Prostate gland (tissue), 2 donors: ENCODE measurements at regions of chr6 and their contacts with region 1.

Region 1: GRCh38 chr6:41936073-41936837 is 5.4 kb downstream of the CCND3 start:
- DNase-seq: peak; percentile 77
- H3K4me3 ChIP-seq: no peak overlapping the region
- H3K27ac ChIP-seq: no peak overlapping the region
- H3K4me1 ChIP-seq: peaks cover 8% of the 10 kb centered on the region
- H3K27me3 ChIP-seq: no peaks in the 10 kb centered on the region
- CTCF ChIP-seq: peak; percentile 59 to 79 (median 70)
- POLR2A ChIP-seq: no peak

Region 2: DNA sequence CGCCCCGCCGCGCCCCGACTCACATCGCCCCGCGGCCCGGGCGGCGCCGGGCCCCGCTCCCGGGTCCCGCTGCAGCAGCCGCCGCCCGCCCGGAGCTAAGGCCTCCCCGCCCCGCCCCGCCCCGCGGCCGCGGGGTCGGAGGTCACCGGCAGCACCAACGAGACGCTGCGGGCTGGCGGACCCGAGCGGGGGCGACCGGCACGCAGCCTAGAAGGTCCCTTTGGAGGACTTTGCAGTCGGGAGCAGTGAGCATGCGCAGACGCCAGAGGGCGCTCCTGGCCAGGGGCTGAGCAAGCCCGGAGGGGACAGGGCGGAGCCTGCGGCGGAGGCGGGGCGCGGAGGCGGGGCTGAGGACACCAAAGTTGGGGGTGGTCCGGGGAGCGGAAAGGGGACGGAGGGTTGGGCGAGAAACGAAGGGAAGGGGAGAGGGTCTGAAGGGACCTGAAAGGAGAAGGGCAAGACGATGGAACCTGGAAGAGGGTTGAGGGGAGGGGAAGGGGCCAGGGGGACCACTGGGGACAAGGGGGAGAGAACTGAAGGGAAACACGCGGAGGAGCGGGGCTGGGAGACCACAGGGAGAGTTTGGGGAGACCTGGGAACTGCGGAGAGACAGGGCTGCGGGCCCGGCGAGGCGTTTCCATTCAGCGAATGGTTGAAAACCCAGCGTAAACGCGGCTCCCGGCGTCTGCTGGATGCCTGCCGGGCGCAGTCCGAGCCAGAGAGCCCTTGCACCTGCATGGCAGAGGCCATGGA is 156.3 kb before region 1 on chr6 and contains the start of gene FRS3:
- intact Hi-C with region 1: loop called (anchors 5 kb)
- DNase-seq: peak; percentile 97
- H3K4me3 ChIP-seq: peak within 1 kb of the TSS; percentile 45 to 65
- H3K27ac ChIP-seq: peak within 1 kb of the TSS; percentile 82 to 89
- H3K4me1 ChIP-seq: peaks cover 16% of the 10 kb centered on the region
- H3K27me3 ChIP-seq: no peaks in the 10 kb centered on the region
- CTCF ChIP-seq: peak; percentile 91 to 99 (median 96)
- POLR2A ChIP-seq: peak; percentile 57
- total RNA-seq, gene FRS3: 5.9 to 18.4 TPM

Region 3: DNA sequence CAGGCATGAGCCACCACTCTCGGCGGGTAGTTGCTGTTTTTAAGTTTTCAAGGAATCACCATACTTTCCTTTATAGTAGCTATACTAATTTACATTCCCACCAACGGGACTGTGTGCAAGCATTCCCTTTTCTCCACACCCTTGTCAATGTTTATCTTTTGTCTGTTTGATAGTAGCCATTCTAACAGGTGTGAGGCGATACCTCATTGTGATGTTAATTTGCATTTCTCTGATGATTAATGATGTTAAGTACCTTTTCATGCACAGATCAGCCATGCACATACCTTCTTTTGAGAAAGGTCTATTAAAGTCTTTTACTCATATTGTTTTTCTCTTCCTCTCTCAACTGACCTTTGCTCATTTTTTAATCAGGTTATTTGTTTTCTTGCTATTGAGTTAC is 48.4 kb after region 1 on chr6:
- intact Hi-C with region 1: no loop called
- DNase-seq: no peak
- H3K4me3 ChIP-seq: no peak overlapping the region
- H3K27ac ChIP-seq: no peak overlapping the region
- H3K4me1 ChIP-seq: no peaks in the 10 kb centered on the region
- H3K27me3 ChIP-seq: no peaks in the 10 kb centered on the region
- CTCF ChIP-seq: no peak
- POLR2A ChIP-seq: no peak

Region 4: GRCh38 chr6:42007286-42008137 is 71.3 kb after region 1 on chr6:
- intact Hi-C with region 1: no loop called
- DNase-seq: no peak
- H3K4me3 ChIP-seq: no peak overlapping the region
- H3K27ac ChIP-seq: no peak overlapping the region
- H3K4me1 ChIP-seq: no peaks in the 10 kb centered on the region
- H3K27me3 ChIP-seq: no peaks in the 10 kb centered on the region
- CTCF ChIP-seq: no peak
- POLR2A ChIP-seq: no peak

Region 5: GRCh38 chr6:42453031-42453653 is 516.9 kb after region 1 on chr6:
- intact Hi-C with region 1: no loop called
- DNase-seq: peak; percentile 84
- H3K4me3 ChIP-seq: peak overlapping the region; percentile 55 to 75
- H3K27ac ChIP-seq: peak overlapping the region; percentile 74 to 87
- H3K4me1 ChIP-seq: peaks cover 14% of the 10 kb centered on the region
- H3K27me3 ChIP-seq: no peaks in the 10 kb centered on the region
- CTCF ChIP-seq: no peak
- POLR2A ChIP-seq: peak; percentile 64